Activated CD8-positive, alpha-beta memory T cell treated with anti-CD3 and anti-CD28 coated beads, Interleukin-2, amount 10 ng/mL, durations not matched to agents 7 days and 5 days (primary cell): ENCODE measurements at regions of chr14 and their contacts with region 1.

Region 1: GRCh38 chr14:23301288-23301968 is 1.2 kb downstream of the PPP1R3E start:
- DNase-seq: peak; percentile 98
- ATAC-seq: peak; percentile 85
- H3K4me3 Mint-ChIP-seq: peak overlapping the region; percentile 96
- H3K27ac Mint-ChIP-seq: peak overlapping the region; percentile 92
- H3K4me1 Mint-ChIP-seq: peaks cover 25% of the 10 kb centered on the region
- H3K27me3 Mint-ChIP-seq: peaks cover 12% of the 10 kb centered on the region

Region 2: GRCh38 chr14:23286020-23286905 is 15.2 kb before region 1 on chr14 and contains the start of gene HOMEZ:
- CTCF ChIA-PET with region 1: interaction called, 26 read pairs
- DNase-seq: peak; percentile 99
- ATAC-seq: peak; percentile 99
- H3K4me3 Mint-ChIP-seq: peak within 1 kb of the TSS; percentile 86
- H3K27ac Mint-ChIP-seq: peak within 1 kb of the TSS; percentile 88
- H3K4me1 Mint-ChIP-seq: peaks cover 19% of the 10 kb centered on the region
- H3K27me3 Mint-ChIP-seq: no peaks in the 10 kb centered on the region
- total RNA-seq, gene HOMEZ: 11.4 to 12.4 TPM